PC-9 (cell line): ENCODE measurements at regions of chr11 and their contacts with region 1.

Region 1: DNA sequence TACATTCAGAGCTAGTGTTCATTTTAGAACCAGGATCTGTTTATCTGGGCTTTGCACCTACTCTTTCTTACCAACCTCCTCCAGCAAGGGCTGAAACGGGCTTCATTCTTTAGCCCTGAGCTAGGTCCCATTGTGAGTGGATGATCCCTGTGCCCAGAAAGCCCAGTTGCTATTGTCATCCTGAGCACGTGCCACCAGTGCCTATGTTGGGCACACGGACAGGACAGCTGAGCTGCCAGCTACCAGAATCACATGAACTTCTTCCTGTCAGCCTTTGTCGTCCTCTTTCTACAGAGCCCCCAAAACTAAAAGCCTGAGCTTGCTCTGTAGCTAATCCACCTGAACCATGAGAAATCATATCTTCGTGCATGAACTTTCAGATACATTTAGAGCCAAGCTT is 74.4 kb upstream of the NTM start:
- DNase-seq: no peak
- H3K4me3 ChIP-seq: no peak overlapping the region
- H3K27ac ChIP-seq: no peak overlapping the region
- H3K4me1 ChIP-seq: no peaks in the 10 kb centered on the region
- H3K27me3 ChIP-seq: peaks cover 88% of the 10 kb centered on the region
- CTCF ChIP-seq: no peak

Region 2: GRCh38 chr11:131522851-131523250 is 226.9 kb after region 1 on chr11:
- CTCF ChIA-PET with region 1: interaction called, 21 read pairs
- POLR2A ChIA-PET with region 1: no interaction called
- intact Hi-C with region 1: no loop called
- DNase-seq: no peak
- H3K4me3 ChIP-seq: no peak overlapping the region
- H3K27ac ChIP-seq: no peak overlapping the region
- H3K4me1 ChIP-seq: no peaks in the 10 kb centered on the region
- H3K27me3 ChIP-seq: peaks cover 28% of the 10 kb centered on the region
- CTCF ChIP-seq: no peak